Activated naive CD4-positive, alpha-beta T cell treated with anti-CD3 and anti-CD28 coated beads for 36 hours (primary cell): ENCODE measurements at regions of chr17 and their contacts with region 1.

Region 1: DNA sequence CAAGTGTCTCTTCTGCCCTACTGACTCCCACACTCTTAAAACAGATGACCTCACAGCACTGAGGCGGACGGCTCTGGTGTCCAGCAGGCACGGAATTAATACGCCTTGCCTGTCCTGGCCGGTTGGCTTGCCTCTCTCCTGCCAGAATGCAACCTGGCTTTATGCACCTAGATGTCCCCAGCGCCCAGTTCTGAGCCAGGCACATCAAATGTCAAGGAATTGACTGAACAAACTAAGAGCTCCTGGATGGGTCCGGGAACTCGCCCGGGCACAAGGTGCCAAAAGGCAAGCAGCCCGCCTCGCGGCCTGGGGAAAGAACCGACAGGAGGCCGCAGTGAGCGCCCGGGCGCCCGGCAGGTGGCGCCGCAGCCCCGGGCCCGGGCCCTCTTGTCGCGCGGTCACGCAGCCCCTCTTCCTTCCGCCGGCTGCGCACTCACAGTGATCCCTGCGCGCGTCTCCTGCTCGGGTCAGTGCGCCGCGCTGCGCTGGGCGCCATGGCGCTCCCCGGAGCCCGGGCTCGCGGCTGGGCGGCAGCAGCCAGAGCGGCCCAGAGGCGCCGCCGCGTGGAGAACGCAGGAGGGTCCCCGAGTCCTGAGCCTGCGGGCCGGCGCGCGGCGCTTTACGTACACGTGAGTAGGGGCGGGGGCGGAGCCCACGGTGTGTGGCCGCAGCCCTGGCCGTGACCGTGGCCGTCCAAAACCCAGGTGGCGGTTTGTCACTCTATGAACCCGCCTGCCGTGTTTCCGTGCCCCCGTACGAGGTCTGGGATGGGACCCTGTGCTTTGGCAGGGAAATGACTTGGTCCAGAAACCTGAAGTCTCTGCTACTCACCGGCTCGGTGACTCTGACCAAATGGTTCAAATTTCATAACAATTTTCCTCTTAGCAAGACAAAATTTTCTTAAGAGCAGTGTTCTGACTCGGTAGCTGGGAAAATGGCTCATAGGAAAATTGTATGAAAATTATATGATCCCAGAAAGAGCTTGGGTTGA is at the start of gene RSAD1:
- DNase-seq: peak; percentile 88
- H3K4me3 Mint-ChIP-seq: peak within 1 kb of the TSS; percentile 81
- H3K27ac Mint-ChIP-seq: peak within 1 kb of the TSS; percentile 95
- H3K4me1 Mint-ChIP-seq: peaks cover 25% of the 10 kb centered on the region
- H3K27me3 Mint-ChIP-seq: peaks cover 5% of the 10 kb centered on the region
- total RNA-seq, gene RSAD1: 39.2 to 40.4 TPM

Region 2: GRCh38 chr17:50345432-50346312 is 133.0 kb before region 1 on chr17 and contains the start of gene XYLT2:
- CTCF ChIA-PET with region 1: no interaction called
- intact Hi-C with region 1: loop called (anchors 1 kb)
- DNase-seq: peak; percentile 90
- H3K4me3 Mint-ChIP-seq: peak within 1 kb of the TSS; percentile 89
- H3K27ac Mint-ChIP-seq: peak within 1 kb of the TSS; percentile 88
- H3K4me1 Mint-ChIP-seq: peaks cover 29% of the 10 kb centered on the region
- H3K27me3 Mint-ChIP-seq: no peaks in the 10 kb centered on the region
- total RNA-seq, gene XYLT2: 21.1 to 21.8 TPM

Region 3: GRCh38 chr17:50414808-50415207 is 63.9 kb before region 1 on chr17:
- CTCF ChIA-PET with region 1: no interaction called
- intact Hi-C with region 1: no loop called
- DNase-seq: no peak
- H3K4me3 Mint-ChIP-seq: no peak overlapping the region
- H3K27ac Mint-ChIP-seq: no peak overlapping the region
- H3K4me1 Mint-ChIP-seq: no peaks in the 10 kb centered on the region
- H3K27me3 Mint-ChIP-seq: no peaks in the 10 kb centered on the region

Region 4: DNA sequence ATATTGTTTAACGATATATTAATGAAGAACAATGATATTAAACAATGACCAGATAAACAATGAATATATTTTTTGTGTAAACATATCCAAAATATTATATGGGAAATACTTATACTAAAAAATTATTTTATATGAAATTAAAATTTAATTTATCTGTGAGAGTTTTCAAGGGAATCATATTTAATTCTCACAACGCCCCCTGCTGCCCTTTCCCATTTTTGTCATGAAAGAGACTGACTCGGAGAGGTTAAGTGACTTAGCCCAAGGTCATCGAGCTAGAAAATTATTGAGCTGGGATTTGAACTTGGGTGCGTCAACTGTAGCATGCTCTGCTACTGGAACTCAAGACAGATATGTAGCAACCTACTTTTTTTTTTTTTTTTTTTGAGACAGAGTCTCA is 22.4 kb after region 1 on chr17:
- CTCF ChIA-PET with region 1: interaction called, 12 read pairs
- intact Hi-C with region 1: loop called (anchors 1 kb)
- DNase-seq: peak; percentile 68
- H3K4me3 Mint-ChIP-seq: no peak overlapping the region
- H3K27ac Mint-ChIP-seq: no peak overlapping the region
- H3K4me1 Mint-ChIP-seq: peaks cover 14% of the 10 kb centered on the region
- H3K27me3 Mint-ChIP-seq: no peaks in the 10 kb centered on the region

Region 5: GRCh38 chr17:50547035-50547735 is 68.5 kb after region 1 on chr17 and contains the start of gene SPATA20:
- CTCF ChIA-PET with region 1: interaction called, 13 read pairs
- intact Hi-C with region 1: loop called (anchors 1 kb)
- DNase-seq: peak; percentile 92
- H3K4me3 Mint-ChIP-seq: peak within 1 kb of the TSS; percentile 74
- H3K27ac Mint-ChIP-seq: peak within 1 kb of the TSS; percentile 67
- H3K4me1 Mint-ChIP-seq: peaks cover 9% of the 10 kb centered on the region
- H3K27me3 Mint-ChIP-seq: peaks cover 2% of the 10 kb centered on the region
- total RNA-seq, gene SPATA20: 15.8 to 16.1 TPM

Region 6: GRCh38 chr17:50689956-50690886 is 211.5 kb after region 1 on chr17:
- CTCF ChIA-PET with region 1: interaction called, 4 read pairs
- intact Hi-C with region 1: loop called (anchors 1 kb)
- DNase-seq: no peak
- H3K4me3 Mint-ChIP-seq: no peak overlapping the region
- H3K27ac Mint-ChIP-seq: no peak overlapping the region
- H3K4me1 Mint-ChIP-seq: no peaks in the 10 kb centered on the region
- H3K27me3 Mint-ChIP-seq: no peaks in the 10 kb centered on the region